IMR-90 (cell line): ENCODE measurements at regions of chr7 and their contacts with region 1.

Region 1: DNA sequence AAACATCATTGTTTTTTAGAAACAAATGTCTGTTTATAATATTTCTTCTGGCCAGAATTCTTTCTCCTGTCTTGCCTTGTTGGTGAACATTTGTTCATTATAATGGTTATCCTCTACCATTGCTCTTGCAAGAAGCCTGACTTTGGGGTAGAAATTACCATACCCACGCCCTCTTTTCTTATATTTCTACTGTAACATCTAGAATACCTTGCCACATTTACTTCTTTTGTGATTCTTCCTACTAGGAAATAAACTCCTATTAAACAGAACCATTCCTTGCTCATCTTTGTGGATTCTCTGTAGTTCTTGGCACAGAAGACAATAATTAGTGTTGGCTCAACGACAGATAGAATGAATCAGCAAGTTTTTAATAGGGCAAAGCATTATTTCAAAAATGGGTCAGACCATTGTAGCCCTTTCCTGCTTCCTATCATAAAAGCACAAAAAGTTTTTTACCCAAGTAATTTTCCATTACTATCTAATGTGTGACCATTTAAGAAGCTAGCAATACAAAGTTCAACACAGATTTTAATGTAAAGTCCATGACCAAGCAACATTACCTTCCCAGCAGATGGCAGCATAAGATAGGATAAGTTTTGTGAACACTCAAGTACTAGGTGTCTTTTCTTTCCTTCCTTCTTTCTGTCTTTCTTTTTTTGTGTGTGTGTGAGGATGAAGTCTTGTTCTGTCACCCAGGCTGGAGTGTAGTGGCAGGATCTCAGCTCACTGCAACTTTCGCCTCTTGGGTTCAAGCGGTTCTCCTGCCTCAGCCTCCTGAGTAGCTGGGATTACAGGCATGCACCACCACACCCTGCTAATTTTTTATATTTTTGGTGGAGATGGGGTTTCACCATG is 270.4 kb downstream of the HGF start:
- DNase-seq: peak; percentile 89
- ATAC-seq: peak; percentile 78
- H3K4me3 ChIP-seq: no peak overlapping the region
- H3K27ac ChIP-seq: peak overlapping the region; percentile 63; the same call in 1 of the 2 replicates
- H3K4me1 ChIP-seq: no peaks in the 10 kb centered on the region
- H3K27me3 ChIP-seq: no peaks in the 10 kb centered on the region
- CTCF ChIP-seq: peak; percentile 76
- POLR2A ChIP-seq: no peak
- RAD21 ChIP-seq: peak; percentile 88

Region 2: GRCh38 chr7:81657551-81657950 is 158.1 kb after region 1 on chr7:
- CTCF ChIA-PET with region 1: no interaction called
- POLR2A ChIA-PET with region 1: no interaction called
- dilution Hi-C with region 1: no loop called
- in situ Hi-C with region 1: no loop called
- intact Hi-C with region 1: no loop called
- DNase-seq: no peak
- ATAC-seq: peak; percentile 35
- H3K4me3 ChIP-seq: no peak overlapping the region
- H3K27ac ChIP-seq: peak overlapping the region; percentile 6; the same call in 1 of the 2 replicates
- H3K4me1 ChIP-seq: peaks cover 3% of the 10 kb centered on the region; the same call in 1 of the 2 replicates
- H3K27me3 ChIP-seq: no peaks in the 10 kb centered on the region
- CTCF ChIP-seq: no peak
- POLR2A ChIP-seq: no peak
- RAD21 ChIP-seq: no peak

Region 3: DNA sequence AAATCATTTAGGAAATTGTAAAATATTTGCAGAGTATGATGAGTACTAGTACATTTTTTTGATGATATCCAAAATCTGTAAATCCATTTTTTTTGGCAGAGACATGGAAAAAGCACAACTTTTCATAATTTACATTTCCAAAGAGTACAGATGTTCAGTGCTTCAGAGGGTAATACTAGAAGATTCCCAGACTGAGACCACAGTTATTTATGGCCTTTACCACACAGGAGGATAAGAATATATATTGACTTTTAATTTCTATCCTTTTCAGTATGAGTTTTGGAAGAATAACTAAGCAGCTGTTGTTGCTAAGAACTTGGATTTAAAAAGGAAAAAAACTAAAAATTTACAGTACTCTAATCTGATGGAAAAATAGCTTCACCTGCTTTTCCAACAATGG is 208.5 kb after region 1 on chr7:
- CTCF ChIA-PET with region 1: no interaction called
- POLR2A ChIA-PET with region 1: no interaction called
- dilution Hi-C with region 1: no loop called
- in situ Hi-C with region 1: no loop called
- intact Hi-C with region 1: loop called (anchors 2 kb)
- DNase-seq: no peak
- ATAC-seq: no peak
- H3K4me3 ChIP-seq: no peak overlapping the region
- H3K27ac ChIP-seq: no peak overlapping the region
- H3K4me1 ChIP-seq: no peaks in the 10 kb centered on the region; the same call in none of the 2 replicates
- H3K27me3 ChIP-seq: no peaks in the 10 kb centered on the region
- CTCF ChIP-seq: no peak
- POLR2A ChIP-seq: no peak
- RAD21 ChIP-seq: no peak

Region 4: GRCh38 chr7:81956520-81956919 is 457.0 kb after region 1 on chr7:
- CTCF ChIA-PET with region 1: interaction called, 10 read pairs
- POLR2A ChIA-PET with region 1: no interaction called
- dilution Hi-C with region 1: no loop called
- in situ Hi-C with region 1: loop called (anchors 5 kb)
- intact Hi-C with region 1: loop called (anchors 1 kb)
- DNase-seq: peak; percentile 73
- ATAC-seq: peak; percentile 85
- H3K4me3 ChIP-seq: no peak overlapping the region
- H3K27ac ChIP-seq: no peak overlapping the region
- H3K4me1 ChIP-seq: no peaks in the 10 kb centered on the region
- H3K27me3 ChIP-seq: no peaks in the 10 kb centered on the region
- CTCF ChIP-seq: peak; percentile 71
- POLR2A ChIP-seq: no peak
- RAD21 ChIP-seq: peak; percentile 81

Region 5: DNA sequence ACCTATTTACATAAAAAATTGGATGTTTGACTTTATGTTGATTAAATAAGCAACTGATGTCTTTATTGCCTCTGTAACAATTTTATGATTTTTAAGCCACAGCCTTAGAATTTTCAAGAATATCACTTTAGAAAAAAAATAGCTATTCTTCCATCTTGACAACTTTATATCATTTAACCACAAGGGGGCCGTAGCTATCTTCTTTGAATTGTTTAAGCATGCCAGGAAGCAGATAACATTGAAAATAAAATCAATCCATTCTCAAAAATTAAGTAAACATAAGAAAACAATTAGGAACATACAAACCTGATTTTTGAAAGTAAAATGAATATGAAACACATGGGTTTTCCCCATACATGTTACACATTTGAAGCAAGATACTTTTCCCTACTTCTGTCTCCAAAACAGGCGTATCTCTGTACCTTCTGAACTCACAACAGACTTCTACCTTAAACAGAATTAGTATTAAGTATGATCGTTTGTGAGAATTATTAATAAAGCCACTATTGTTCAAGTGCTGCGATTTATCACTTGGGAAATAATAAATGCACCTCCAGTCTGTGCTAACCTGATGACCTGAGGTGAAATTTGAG is 735.1 kb after region 1 on chr7:
- CTCF ChIA-PET with region 1: no interaction called
- POLR2A ChIA-PET with region 1: no interaction called
- dilution Hi-C with region 1: no loop called
- in situ Hi-C with region 1: loop called (anchors 25 kb)
- intact Hi-C with region 1: loop called (anchors 10 kb)
- DNase-seq: peak; percentile 59
- ATAC-seq: no peak; the same call in 1 of the 2 replicates
- H3K4me3 ChIP-seq: no peak overlapping the region
- H3K27ac ChIP-seq: no peak overlapping the region
- H3K4me1 ChIP-seq: 0 out of 2 replicates have a peak, but pooled peaks cover 1% of the 10 kb centered on the region
- H3K27me3 ChIP-seq: no peaks in the 10 kb centered on the region
- CTCF ChIP-seq: peak; percentile 75
- POLR2A ChIP-seq: no peak
- RAD21 ChIP-seq: peak; percentile 75

Region 6: DNA sequence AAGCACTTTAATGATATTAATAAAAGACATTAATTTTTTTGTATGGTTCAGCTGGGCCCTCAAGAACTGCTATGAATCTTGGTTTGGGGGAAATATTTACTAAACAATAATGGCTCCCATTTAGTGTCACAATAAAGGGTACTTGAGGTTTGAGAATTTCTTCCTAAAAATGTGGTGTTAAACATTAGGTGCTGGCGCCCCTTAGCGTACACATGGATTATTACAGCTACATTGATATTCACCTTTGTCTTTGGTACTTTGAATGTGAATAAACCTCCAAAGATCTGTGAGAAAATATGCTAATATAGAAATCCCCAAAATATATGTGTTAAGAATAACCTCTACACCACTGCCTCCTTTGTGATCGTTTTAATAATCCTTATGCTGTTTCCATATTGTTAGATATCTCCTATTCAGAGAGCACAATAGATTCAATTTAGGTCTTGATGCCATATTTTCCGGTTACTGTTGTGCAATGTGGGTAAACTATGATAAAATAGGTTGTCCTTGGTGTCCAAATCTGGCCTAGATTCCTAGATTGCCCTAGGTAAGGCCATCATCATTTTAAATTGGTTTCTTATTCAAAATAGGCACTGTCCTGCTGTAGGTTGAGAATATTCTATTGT is 1105.9 kb after region 1 on chr7:
- CTCF ChIA-PET with region 1: no interaction called
- POLR2A ChIA-PET with region 1: no interaction called
- dilution Hi-C with region 1: no loop called
- in situ Hi-C with region 1: no loop called
- intact Hi-C with region 1: loop called (anchors 1 kb)
- DNase-seq: peak; percentile 46
- ATAC-seq: peak; percentile 80
- H3K4me3 ChIP-seq: no peak overlapping the region
- H3K27ac ChIP-seq: no peak overlapping the region
- H3K4me1 ChIP-seq: no peaks in the 10 kb centered on the region
- H3K27me3 ChIP-seq: no peaks in the 10 kb centered on the region
- CTCF ChIP-seq: peak; percentile 81
- POLR2A ChIP-seq: no peak
- RAD21 ChIP-seq: peak; percentile 81